ENCODE measurements at regions of chr10 and their contacts with region 1.

Region 1: GRCh38 chr10:100009793-100010676 is at the start of gene DNMBP:
- DNase-seq: peak; percentile 54 to 92 (median 78)
- ATAC-seq: peak; percentile 92
- H3K4me3 ChIP-seq: peak within 1 kb of the TSS; percentile 87
- H3K4me3 Mint-ChIP-seq: peak within 1 kb of the TSS; percentile 95
- H3K27ac ChIP-seq: peak within 1 kb of the TSS in 1 of 2 donors; percentile 23
- H3K27ac Mint-ChIP-seq: peak within 1 kb of the TSS; percentile 42
- H3K4me1 ChIP-seq: peaks cover 13% of the 10 kb centered on the region
- H3K4me1 Mint-ChIP-seq: peaks cover 55% of the 10 kb centered on the region
- H3K27me3 ChIP-seq: no peaks in the 10 kb centered on the region
- H3K27me3 Mint-ChIP-seq: no peaks in the 10 kb centered on the region
- CTCF ChIP-seq: peak; percentile 29
- total RNA-seq, gene DNMBP: 2.2 to 2.3 TPM

Region 2: DNA sequence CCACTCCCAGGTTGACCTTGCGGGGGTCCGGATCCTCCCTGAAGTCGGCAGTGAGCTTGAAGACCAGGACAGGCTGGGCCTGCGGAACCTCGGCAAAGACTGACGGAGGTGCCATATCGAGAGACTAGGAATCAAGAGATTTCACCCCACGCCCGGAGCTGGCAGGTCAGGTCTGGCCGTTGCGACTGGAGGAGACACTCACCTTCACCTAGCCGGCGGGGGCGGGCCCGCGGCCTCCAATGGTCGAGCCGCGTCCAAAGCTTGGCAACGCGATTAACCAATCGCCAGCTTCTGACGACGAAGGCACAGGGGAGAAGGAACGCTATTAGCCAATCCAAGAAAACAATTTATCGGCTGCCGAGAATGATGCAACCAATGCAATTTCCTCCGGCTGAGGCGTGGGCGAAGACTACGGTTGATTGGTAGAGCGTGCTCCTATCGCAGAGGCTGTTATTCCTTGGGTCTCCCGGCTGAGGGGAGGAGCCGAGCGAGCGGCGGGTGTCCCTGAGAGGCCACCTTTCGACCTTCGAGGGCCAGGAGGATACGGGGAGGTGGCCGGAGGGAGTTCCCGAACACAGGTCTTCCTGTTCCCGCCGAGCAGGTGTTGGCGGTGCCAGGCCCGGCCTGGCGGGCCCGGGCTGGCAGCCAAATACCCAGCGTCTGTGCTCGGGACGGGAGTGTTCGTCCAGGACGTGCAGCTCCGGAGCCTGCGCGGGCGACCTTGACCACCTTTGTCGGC is 579.4 kb before region 1 on chr10 and contains the start of gene GOT1:
- CTCF ChIA-PET with region 1: no interaction called
- POLR2A ChIA-PET with region 1: no interaction called
- intact Hi-C with region 1: loop called in 1 of 2 experiments (anchors 10 kb)
- DNase-seq: peak; percentile 79 to 98 (median 87)
- ATAC-seq: peak; percentile 93
- H3K4me3 ChIP-seq: peak within 1 kb of the TSS; percentile 93
- H3K4me3 Mint-ChIP-seq: peak within 1 kb of the TSS; percentile 91
- H3K27ac ChIP-seq: peak within 1 kb of the TSS; percentile 52 to 67
- H3K27ac Mint-ChIP-seq: peak within 1 kb of the TSS; percentile 95
- H3K4me1 ChIP-seq: peaks cover 17% of the 10 kb centered on the region
- H3K4me1 Mint-ChIP-seq: peaks cover 47% of the 10 kb centered on the region
- H3K27me3 ChIP-seq: no peaks in the 10 kb centered on the region
- H3K27me3 Mint-ChIP-seq: no peaks in the 10 kb centered on the region
- CTCF ChIP-seq: no peak
- total RNA-seq, gene GOT1: 3.5 to 5.7 TPM

Region 3: DNA sequence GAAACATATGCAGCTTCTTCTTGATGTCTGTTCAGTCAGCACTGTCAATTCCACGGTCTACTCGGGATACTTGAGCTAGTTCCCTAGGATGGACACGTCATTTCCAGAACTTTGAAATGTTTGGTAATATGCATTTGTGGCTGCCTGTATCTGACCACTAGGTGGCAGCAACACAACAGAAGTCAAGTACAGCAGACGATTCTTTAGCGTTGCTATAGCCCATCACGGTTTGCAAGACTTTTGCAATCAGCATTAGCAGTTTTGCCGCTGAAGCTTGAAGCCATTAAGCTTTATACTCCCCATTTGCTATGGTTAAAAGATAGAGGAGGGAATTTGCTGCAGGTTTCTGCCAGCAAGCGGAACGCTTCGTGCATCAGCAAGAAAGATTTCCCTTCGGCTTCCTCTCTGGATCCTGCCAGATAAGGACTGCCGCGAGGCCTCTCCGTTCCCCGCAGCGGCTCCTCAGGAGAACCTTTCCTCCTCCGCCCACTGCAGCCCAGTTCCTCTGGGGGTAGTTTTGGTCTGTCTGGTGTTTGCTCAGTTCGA is 164.1 kb before region 1 on chr10:
- CTCF ChIA-PET with region 1: interaction called, 16 read pairs
- POLR2A ChIA-PET with region 1: interaction called, 10 read pairs
- intact Hi-C with region 1: loop called in 1 of 2 experiments (anchors 1 kb)
- DNase-seq: peak; percentile 41 to 88 (median 58)
- ATAC-seq: peak; percentile 81
- H3K4me3 ChIP-seq: peak overlapping the region; percentile 13
- H3K4me3 Mint-ChIP-seq: no peak overlapping the region
- H3K27ac ChIP-seq: no peak overlapping the region
- H3K27ac Mint-ChIP-seq: no peak overlapping the region
- H3K4me1 ChIP-seq: peaks cover 6% of the 10 kb centered on the region
- H3K4me1 Mint-ChIP-seq: peaks cover 5% of the 10 kb centered on the region
- H3K27me3 ChIP-seq: peaks cover 0 to 8% of the 10 kb centered on the region in 2 experiments
- H3K27me3 Mint-ChIP-seq: no peaks in the 10 kb centered on the region
- CTCF ChIP-seq: peak; percentile 92

Region 4: DNA sequence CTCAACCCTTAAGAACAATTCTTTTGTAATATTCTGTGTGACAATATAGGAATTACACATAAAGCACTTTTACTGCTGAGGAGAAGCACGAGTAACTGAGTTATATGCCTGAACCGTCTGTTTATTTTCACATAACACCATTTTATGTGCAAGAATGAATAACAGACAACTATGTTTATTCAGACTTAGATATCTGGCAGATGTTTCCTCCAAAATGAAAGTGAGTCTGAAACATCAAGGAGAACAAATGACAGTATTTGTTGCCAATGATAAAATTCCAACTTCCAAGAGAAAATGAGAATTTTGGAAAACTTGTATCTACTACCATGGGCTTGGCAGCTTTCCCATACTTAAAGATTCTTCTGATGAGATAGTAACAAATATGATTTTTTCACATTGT is 51.7 kb before region 1 on chr10:
- CTCF ChIA-PET with region 1: no interaction called
- POLR2A ChIA-PET with region 1: no interaction called
- intact Hi-C with region 1: no loop called
- DNase-seq: no peak
- ATAC-seq: no peak
- H3K4me3 ChIP-seq: no peak overlapping the region
- H3K4me3 Mint-ChIP-seq: no peak overlapping the region
- H3K27ac ChIP-seq: no peak overlapping the region
- H3K27ac Mint-ChIP-seq: no peak overlapping the region
- H3K4me1 ChIP-seq: no peaks in the 10 kb centered on the region
- H3K4me1 Mint-ChIP-seq: no peaks in the 10 kb centered on the region
- H3K27me3 ChIP-seq: no peaks in the 10 kb centered on the region
- H3K27me3 Mint-ChIP-seq: no peaks in the 10 kb centered on the region
- CTCF ChIP-seq: no peak

Region 5: DNA sequence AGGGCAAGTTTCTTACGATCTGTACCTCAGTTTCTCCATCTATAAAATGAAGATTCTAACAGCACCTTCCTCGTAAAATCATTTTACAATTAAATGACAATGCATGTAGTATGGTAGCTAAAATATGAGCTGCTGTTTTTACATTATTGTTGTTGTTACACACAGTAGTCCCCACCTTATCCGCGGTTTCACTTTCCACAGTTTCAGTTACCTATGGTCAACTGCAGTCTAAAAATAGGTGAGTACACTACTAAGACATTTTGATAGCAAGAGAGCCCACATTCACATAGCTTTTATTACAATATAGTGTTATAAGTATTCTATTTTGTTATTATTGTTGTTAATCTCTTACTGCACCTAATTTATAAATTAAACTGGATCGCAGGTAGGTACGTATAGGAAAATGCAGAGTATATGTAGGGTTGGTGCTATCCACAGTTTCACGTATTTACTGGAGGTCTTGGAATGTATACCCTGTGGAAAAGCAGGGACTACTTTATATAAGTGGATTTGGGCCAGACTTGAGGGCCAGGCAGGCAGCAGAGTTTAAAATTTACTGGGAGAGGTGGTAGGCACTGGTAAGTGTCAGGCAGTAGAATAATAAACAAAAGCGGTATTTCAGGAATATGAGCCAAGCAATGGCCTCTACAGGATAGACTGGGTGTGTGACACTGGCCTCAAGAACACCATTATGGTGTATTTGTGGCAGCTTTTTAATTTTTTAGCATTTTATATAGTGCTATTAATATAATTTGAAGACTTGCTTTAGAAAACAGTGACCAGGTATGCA is 10.5 kb before region 1 on chr10:
- CTCF ChIA-PET with region 1: interaction called, 14 read pairs
- POLR2A ChIA-PET with region 1: no interaction called
- intact Hi-C with region 1: no loop called
- DNase-seq: no peak
- ATAC-seq: no peak
- H3K4me3 ChIP-seq: no peak overlapping the region
- H3K4me3 Mint-ChIP-seq: no peak overlapping the region
- H3K27ac ChIP-seq: no peak overlapping the region
- H3K27ac Mint-ChIP-seq: no peak overlapping the region
- H3K4me1 ChIP-seq: peaks cover under 1% of the 10 kb centered on the region
- H3K4me1 Mint-ChIP-seq: peaks cover 6% of the 10 kb centered on the region
- H3K27me3 ChIP-seq: no peaks in the 10 kb centered on the region
- H3K27me3 Mint-ChIP-seq: no peaks in the 10 kb centered on the region
- CTCF ChIP-seq: no peak

Region 6: GRCh38 chr10:100286051-100287033 is 276.3 kb after region 1 on chr10 and contains the start of gene BLOC1S2:
- CTCF ChIA-PET with region 1: no interaction called
- POLR2A ChIA-PET with region 1: no interaction called
- intact Hi-C with region 1: loop called in 1 of 2 experiments (anchors 10 kb)
- DNase-seq: peak; percentile 70 to 92 (median 82)
- ATAC-seq: peak; percentile 81
- H3K4me3 ChIP-seq: peak within 1 kb of the TSS; percentile 96
- H3K4me3 Mint-ChIP-seq: peak within 1 kb of the TSS; percentile 98
- H3K27ac ChIP-seq: peak within 1 kb of the TSS; percentile 85 to 92
- H3K27ac Mint-ChIP-seq: peak within 1 kb of the TSS; percentile 97
- H3K4me1 ChIP-seq: peaks cover 22% of the 10 kb centered on the region
- H3K4me1 Mint-ChIP-seq: peaks cover 30% of the 10 kb centered on the region
- H3K27me3 ChIP-seq: no peaks in the 10 kb centered on the region
- H3K27me3 Mint-ChIP-seq: no peaks in the 10 kb centered on the region
- CTCF ChIP-seq: no peak
- total RNA-seq, gene BLOC1S2: 49.4 to 55.9 TPM

Region 7: GRCh38 chr10:101257084-101257483 is 1247.0 kb after region 1 on chr10:
- CTCF ChIA-PET with region 1: no interaction called
- POLR2A ChIA-PET with region 1: no interaction called
- intact Hi-C with region 1: no loop called
- DNase-seq: no peak
- ATAC-seq: no peak
- H3K4me3 ChIP-seq: no peak overlapping the region
- H3K4me3 Mint-ChIP-seq: no peak overlapping the region
- H3K27ac ChIP-seq: no peak overlapping the region
- H3K27ac Mint-ChIP-seq: no peak overlapping the region
- H3K4me1 ChIP-seq: no peaks in the 10 kb centered on the region
- H3K4me1 Mint-ChIP-seq: no peaks in the 10 kb centered on the region
- H3K27me3 ChIP-seq: peaks cover 22 to 26% of the 10 kb centered on the region in 2 experiments
- H3K27me3 Mint-ChIP-seq: peaks cover 58% of the 10 kb centered on the region
- CTCF ChIP-seq: no peak